GM13976 (cell line): ENCODE measurements at regions of chr14 and their contacts with region 1.

Region 1: GRCh38 chr14:39446131-39446744 is 14.0 kb upstream of the FBXO33 start:
- DNase-seq: no peak
- CTCF ChIP-seq: no peak

Region 2: DNA sequence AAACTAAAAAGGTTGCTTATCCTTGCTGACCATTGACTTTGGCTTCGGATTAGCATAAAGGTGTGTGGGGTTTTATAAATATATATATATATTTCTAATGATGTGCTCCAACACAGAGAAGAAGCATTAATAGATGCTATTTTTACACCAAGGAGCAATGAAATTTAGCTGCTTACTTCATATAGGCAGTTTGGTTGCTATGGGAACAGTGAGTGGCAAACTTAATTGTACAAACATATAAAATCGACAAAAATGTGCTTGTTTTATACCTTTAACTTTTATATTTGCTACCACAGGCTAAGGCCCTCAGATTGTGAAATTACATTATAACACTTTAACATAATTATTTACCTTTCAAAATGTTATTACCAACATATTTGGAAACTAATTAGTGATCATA is 646.6 kb before region 1 on chr14:
- in situ Hi-C with region 1: no loop called
- DNase-seq: no peak
- CTCF ChIP-seq: no peak

Region 3: DNA sequence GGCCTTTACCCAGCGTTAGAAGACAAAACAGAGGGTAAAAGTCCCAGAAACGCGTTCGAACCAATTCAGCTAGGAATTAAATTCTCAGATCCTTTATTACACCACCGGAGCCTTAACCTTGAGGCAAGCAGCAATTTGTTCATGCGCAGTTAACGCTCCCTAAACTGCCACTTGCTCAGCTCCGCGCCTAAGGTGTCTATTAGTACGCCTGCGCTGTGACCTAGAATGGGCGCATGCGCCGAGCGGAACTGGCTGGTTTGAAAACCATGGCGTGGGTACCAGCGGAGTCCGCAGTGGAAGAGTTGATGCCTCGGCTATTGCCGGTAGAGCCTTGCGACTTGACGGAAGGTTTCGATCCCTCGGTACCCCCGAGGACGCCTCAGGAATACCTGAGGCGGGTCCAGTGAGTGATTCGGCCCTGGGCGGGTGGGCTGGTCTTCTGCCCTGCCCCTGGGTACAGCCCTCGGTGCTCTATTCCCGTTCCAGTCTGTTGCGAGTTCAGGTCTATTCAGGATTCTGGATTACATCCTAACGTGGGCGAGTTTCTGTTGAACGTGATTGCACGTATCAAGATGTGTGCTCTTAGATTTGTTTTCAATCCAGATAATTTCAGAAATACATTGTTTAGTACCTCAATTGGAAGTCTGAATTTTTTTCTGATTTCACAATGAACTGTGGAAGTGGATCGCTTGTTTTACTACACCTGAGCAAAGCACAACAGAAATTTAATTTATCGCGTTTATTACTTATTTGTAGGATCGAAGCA is 332.0 kb before region 1 on chr14 and contains the start of gene GEMIN2:
- in situ Hi-C with region 1: loop called (anchors 10 kb)
- DNase-seq: peak; percentile 92
- CTCF ChIP-seq: no peak